Activated CD4-positive, alpha-beta T cell treated with anti-CD3 and anti-CD28 coated beads for 36 hours (primary cell): ENCODE measurements at regions of chr5 and their contacts with region 1.

Region 1: GRCh38 chr5:79020861-79021561 is 35.9 kb upstream of the ARSB start:
- DNase-seq: peak; percentile 70
- ATAC-seq: no peak
- H3K4me3 Mint-ChIP-seq: no peak overlapping the region
- H3K27ac Mint-ChIP-seq: no peak overlapping the region
- H3K4me1 Mint-ChIP-seq: peaks cover 2% of the 10 kb centered on the region
- H3K27me3 Mint-ChIP-seq: peaks cover 33% of the 10 kb centered on the region

Region 2: GRCh38 chr5:77972469-77973252 is 1048.3 kb before region 1 on chr5:
- CTCF ChIA-PET with region 1: no interaction called
- POLR2A ChIA-PET with region 1: no interaction called
- intact Hi-C with region 1: no loop called
- DNase-seq: peak; percentile 55
- ATAC-seq: peak; percentile 65
- H3K4me3 Mint-ChIP-seq: peak overlapping the region; percentile 56
- H3K27ac Mint-ChIP-seq: no peak overlapping the region
- H3K4me1 Mint-ChIP-seq: peaks cover 12% of the 10 kb centered on the region
- H3K27me3 Mint-ChIP-seq: peaks cover 51% of the 10 kb centered on the region

Region 3: GRCh38 chr5:78886341-78887230 is 134.4 kb before region 1 on chr5:
- CTCF ChIA-PET with region 1: interaction called, 5 read pairs
- POLR2A ChIA-PET with region 1: no interaction called
- intact Hi-C with region 1: loop called in 1 of 2 experiments (anchors 5 kb)
- DNase-seq: no peak
- ATAC-seq: no peak
- H3K4me3 Mint-ChIP-seq: no peak overlapping the region
- H3K27ac Mint-ChIP-seq: no peak overlapping the region
- H3K4me1 Mint-ChIP-seq: peaks cover 18% of the 10 kb centered on the region
- H3K27me3 Mint-ChIP-seq: no peaks in the 10 kb centered on the region

Region 4: DNA sequence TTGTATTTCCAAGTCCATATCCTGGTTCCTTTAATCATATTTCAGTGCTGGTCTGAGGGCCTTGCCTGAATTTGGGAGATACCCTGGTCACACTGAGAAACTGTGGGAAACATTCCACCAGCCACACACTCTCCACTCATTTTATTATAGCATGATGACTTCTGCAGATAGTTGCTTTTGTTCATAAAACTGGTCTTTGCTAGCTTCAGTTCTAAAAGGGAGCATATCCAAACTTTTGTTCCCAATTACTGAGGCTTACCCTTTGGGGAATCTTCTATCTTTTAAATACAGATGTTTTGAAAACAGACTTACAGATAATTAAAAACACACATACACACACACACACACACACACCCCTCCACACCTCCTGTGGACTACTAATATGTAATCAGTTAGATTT is 27.4 kb after region 1 on chr5:
- CTCF ChIA-PET with region 1: interaction called, 13 read pairs
- POLR2A ChIA-PET with region 1: no interaction called
- intact Hi-C with region 1: no loop called
- DNase-seq: no peak
- ATAC-seq: no peak
- H3K4me3 Mint-ChIP-seq: no peak overlapping the region
- H3K27ac Mint-ChIP-seq: no peak overlapping the region
- H3K4me1 Mint-ChIP-seq: no peaks in the 10 kb centered on the region
- H3K27me3 Mint-ChIP-seq: peaks cover 12% of the 10 kb centered on the region

Region 5: DNA sequence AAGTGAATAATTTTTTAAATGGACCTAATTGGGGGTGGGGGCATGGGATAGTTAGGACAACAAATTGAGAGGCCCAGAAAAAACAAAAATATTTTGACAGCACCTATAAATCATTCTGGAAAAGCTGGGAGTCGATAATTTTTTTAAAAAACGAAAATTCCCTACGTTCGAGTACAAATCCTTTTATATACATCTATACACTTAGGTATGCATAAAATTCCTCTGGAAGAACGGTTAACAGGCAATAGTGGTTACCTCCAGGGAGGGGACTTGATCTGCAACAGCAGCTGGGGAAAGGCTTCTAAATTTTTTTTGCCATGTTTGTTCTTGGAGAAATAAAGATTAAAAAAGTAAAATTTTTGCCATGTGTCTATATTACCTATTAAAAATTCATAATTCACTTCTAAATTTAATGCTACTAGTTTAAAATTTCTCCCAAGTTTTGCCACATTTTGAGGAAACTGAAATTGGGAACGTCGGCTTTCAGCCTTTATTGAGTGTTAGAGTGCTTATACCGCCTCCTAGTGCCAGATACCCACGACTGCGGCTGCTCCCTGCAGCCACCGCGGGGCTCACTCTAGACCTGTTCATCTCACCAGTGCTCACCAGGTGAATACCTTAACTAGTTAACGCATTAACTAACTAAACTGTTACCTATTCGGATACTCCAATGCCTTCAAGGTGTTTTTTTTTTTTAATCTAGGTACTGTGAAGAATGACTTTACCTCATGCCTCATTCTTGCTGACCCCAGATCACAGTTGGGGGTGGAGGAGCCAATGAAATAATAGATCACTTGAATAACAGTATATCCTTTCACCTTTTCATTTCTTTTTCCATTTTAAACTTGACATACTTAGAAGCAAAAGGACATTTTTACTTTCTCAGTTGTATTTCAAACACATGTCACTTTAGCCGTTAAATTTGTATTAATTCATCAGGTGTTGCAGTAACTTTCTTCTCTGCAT is 88.8 kb after region 1 on chr5:
- CTCF ChIA-PET with region 1: interaction called, 23 read pairs
- POLR2A ChIA-PET with region 1: no interaction called
- intact Hi-C with region 1: loop called (anchors 1 kb)
- DNase-seq: peak; percentile 65
- ATAC-seq: peak; percentile 66
- H3K4me3 Mint-ChIP-seq: no peak overlapping the region
- H3K27ac Mint-ChIP-seq: no peak overlapping the region
- H3K4me1 Mint-ChIP-seq: no peaks in the 10 kb centered on the region
- H3K27me3 Mint-ChIP-seq: peaks cover 48% of the 10 kb centered on the region

Region 6: DNA sequence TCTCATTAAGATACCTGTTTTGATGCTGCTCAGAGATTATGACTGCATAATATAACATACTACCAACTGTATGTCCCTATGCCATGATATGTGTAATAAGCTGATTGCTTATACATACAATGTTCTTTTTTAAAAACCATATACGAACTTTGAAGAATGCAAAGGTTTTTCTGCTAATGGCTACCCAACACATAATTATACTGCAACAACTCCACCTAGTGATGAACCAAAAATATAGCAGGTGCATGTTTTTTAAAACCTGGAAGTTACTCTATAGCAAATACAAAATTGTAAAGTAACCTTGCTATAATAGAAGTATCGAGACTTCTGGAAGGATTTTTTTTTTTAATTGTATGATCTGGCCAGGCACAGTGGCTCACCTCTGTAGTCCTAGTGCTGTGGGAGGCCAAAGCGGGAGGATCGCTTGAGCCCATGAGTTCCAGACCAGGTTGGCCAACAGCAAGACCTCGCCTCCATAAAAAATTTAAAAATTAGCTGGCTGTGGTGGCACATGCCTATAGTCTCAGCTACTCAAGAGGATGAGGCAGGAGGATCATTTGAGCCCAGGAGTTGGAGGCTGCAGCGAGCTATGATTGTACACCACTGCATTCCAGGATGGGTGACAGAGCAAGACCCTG is 443.8 kb after region 1 on chr5:
- CTCF ChIA-PET with region 1: interaction called, 17 read pairs
- POLR2A ChIA-PET with region 1: no interaction called
- intact Hi-C with region 1: loop called (anchors 1 to 2 kb)
- DNase-seq: no peak
- ATAC-seq: peak; percentile 30
- H3K4me3 Mint-ChIP-seq: no peak overlapping the region
- H3K27ac Mint-ChIP-seq: no peak overlapping the region
- H3K4me1 Mint-ChIP-seq: no peaks in the 10 kb centered on the region
- H3K27me3 Mint-ChIP-seq: peaks cover 3% of the 10 kb centered on the region

Region 7: DNA sequence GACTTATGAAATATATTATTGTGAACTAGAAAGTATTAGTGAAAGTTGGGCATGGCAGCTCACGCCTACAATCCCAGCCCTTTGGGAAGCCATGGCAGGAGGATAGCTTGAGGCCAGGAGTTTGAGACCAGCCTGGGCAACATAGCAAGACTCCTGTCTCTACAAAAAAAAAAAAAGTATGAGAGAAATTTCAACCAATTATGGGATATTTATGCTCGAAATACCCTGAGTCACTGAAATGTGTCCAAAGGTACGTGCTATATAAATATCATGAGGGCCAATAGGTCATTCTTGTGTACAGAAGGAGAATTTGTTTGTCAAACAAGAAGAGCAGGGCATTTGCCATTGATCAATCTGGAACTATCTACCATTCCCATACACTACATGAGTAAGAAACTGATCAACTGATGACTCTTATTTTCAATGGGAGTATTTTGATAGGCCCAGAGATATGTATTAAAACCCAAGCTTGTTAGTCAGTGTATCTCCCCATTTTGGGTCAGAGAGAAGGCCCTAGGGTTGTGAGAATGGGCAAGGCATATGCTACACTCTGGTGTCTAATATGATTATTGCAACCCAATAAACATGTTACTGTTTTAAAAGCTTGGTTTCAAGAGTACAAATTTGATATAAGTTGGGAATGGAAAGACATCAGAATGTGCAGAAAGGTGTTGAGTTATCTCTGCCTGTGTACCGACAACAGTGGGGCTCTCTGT is 514.6 kb after region 1 on chr5:
- CTCF ChIA-PET with region 1: interaction called, 5 read pairs
- POLR2A ChIA-PET with region 1: no interaction called
- intact Hi-C with region 1: loop called in 1 of 2 experiments (anchors 2 kb)
- DNase-seq: no peak
- ATAC-seq: no peak
- H3K4me3 Mint-ChIP-seq: no peak overlapping the region
- H3K27ac Mint-ChIP-seq: no peak overlapping the region
- H3K4me1 Mint-ChIP-seq: no peaks in the 10 kb centered on the region
- H3K27me3 Mint-ChIP-seq: peaks cover 3% of the 10 kb centered on the region

Region 8: GRCh38 chr5:79857714-79858409 is 836.9 kb after region 1 on chr5:
- CTCF ChIA-PET with region 1: no interaction called
- POLR2A ChIA-PET with region 1: no interaction called
- intact Hi-C with region 1: loop called in 1 of 2 experiments (anchors 5 kb)
- DNase-seq: peak; percentile 91
- ATAC-seq: peak; percentile 60
- H3K4me3 Mint-ChIP-seq: no peak overlapping the region
- H3K27ac Mint-ChIP-seq: no peak overlapping the region
- H3K4me1 Mint-ChIP-seq: peaks cover 5% of the 10 kb centered on the region
- H3K27me3 Mint-ChIP-seq: no peaks in the 10 kb centered on the region